SK-N-SH (cell line): ENCODE measurements at regions of chr7 and their contacts with region 1.

Region 1: DNA sequence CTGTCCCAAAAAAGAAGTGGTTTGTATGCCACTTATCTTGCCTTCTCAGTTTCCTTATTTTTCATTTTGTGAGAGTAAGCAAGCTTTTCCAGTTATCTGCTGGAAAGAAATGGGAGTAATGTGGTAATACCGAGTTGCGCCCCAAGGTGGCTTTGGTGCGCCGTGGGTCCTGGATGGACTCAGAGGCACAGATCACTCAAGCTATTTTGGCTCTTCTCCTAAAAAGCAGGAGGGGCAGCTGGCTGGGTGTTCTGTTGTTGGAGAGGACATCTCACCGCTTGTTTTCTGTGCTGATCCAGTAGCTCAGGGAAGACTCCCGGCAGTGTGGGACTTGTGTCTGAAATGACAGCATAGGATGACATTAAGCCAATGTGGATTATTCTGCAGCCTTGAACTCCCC is 16.4 kb downstream of the PRKRIP1 start:
- DNase-seq: peak; percentile 73
- H3K4me3 ChIP-seq: no peak overlapping the region
- H3K27ac ChIP-seq: no peak overlapping the region
- H3K4me1 ChIP-seq: peaks cover 0 to 5% of the 10 kb centered on the region in 2 experiments; a peak in 1 of 4 replicates
- H3K27me3 ChIP-seq: no peaks in the 10 kb centered on the region
- CTCF ChIP-seq: peak; percentile 60
- EP300 ChIP-seq: no peak
- RAD21 ChIP-seq: peak; percentile 73

Region 2: DNA sequence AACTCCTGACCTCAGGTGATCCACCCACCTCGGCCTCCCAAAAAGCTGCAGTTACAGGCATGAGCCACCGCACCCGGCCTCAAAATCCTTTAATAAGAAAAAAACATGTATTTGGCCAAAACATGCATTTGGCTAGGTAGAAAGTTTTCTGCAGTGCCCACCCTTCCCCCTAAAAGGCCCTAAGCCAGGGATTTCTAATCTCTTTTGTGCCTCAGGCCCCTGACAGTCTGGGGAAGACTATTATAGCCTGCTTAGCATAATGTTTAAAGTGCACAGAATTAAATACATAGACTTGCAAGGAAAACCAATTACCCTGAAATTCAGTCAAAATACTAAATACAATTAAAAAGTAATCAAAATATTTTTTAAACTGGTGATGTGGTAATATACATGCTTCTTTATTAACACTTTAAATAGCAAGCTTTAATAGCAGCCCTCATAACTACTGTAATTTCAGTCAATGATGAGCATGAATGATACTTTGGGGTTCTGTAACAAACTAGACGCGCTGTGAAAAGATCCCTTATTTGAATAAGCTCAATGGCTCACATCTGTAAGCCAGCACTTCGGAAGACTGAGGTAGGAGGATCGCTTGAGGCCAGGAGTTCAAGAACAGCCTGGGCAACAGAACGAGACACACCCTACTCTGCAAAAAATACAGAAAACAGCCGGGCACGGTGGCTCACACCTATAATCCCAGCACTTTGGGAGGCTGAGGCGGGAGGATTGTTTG is 86.2 kb before region 1 on chr7:
- CTCF ChIA-PET with region 1: no interaction called
- POLR2A ChIA-PET with region 1: no interaction called
- DNase-seq: no peak
- H3K4me3 ChIP-seq: no peak overlapping the region
- H3K27ac ChIP-seq: no peak overlapping the region
- H3K4me1 ChIP-seq: peaks cover 0 to 2% of the 10 kb centered on the region in 2 experiments; a peak in 1 of 4 replicates
- H3K27me3 ChIP-seq: no peaks in the 10 kb centered on the region; the same call in 1 of the 2 replicates
- CTCF ChIP-seq: no peak
- EP300 ChIP-seq: no peak
- RAD21 ChIP-seq: no peak

Region 3: GRCh38 chr7:102396027-102397019 is 16.2 kb before region 1 on chr7 and contains the start of gene PRKRIP1:
- CTCF ChIA-PET with region 1: interaction called, 47 read pairs
- POLR2A ChIA-PET with region 1: interaction called, 4 read pairs
- DNase-seq: peak; percentile 95
- H3K4me3 ChIP-seq: peak within 1 kb of the TSS; percentile 67 to 97
- H3K27ac ChIP-seq: peak within 1 kb of the TSS; percentile 80 to 88
- H3K4me1 ChIP-seq: peaks cover 0 to 7% of the 10 kb centered on the region in 2 experiments; a peak in 2 of 4 replicates
- H3K27me3 ChIP-seq: no peaks in the 10 kb centered on the region
- CTCF ChIP-seq: no peak
- EP300 ChIP-seq: no peak
- RAD21 ChIP-seq: no peak
- polyA plus RNA-seq, gene PRKRIP1: 41.2 and 55.0 TPM in 2 replicates

Region 4: GRCh38 chr7:102433219-102434038 is 20.9 kb after region 1 on chr7 and contains the start of gene ORAI2:
- CTCF ChIA-PET with region 1: interaction called, 11 read pairs
- POLR2A ChIA-PET with region 1: interaction called, 3 read pairs
- DNase-seq: peak; percentile 100
- H3K4me3 ChIP-seq: peak within 1 kb of the TSS; percentile 63 to 94
- H3K27ac ChIP-seq: peak within 1 kb of the TSS; percentile 60 to 74; a peak in 3 of 4 replicates
- H3K4me1 ChIP-seq: peaks cover 8 to 11% of the 10 kb centered on the region in 2 experiments; a peak in 2 of 4 replicates
- H3K27me3 ChIP-seq: no peaks in the 10 kb centered on the region
- CTCF ChIP-seq: no peak
- EP300 ChIP-seq: no peak
- RAD21 ChIP-seq: no peak
- polyA plus RNA-seq, gene ORAI2: 78.7 and 85.8 TPM in 2 replicates

Region 5: GRCh38 chr7:102440078-102440795 is 27.7 kb after region 1 on chr7:
- CTCF ChIA-PET with region 1: interaction called, 10 read pairs
- POLR2A ChIA-PET with region 1: no interaction called
- DNase-seq: peak; percentile 40
- H3K4me3 ChIP-seq: no peak overlapping the region
- H3K27ac ChIP-seq: peak overlapping the region; percentile 41 to 69
- H3K4me1 ChIP-seq: peaks cover 7 to 12% of the 10 kb centered on the region in 2 experiments; a peak in 2 of 4 replicates
- H3K27me3 ChIP-seq: no peaks in the 10 kb centered on the region
- CTCF ChIP-seq: no peak
- EP300 ChIP-seq: no peak; a peak in 1 of 4 replicates
- RAD21 ChIP-seq: no peak